ENCODE measurements at regions of chr2 and their contacts with region 1.

Region 1: DNA sequence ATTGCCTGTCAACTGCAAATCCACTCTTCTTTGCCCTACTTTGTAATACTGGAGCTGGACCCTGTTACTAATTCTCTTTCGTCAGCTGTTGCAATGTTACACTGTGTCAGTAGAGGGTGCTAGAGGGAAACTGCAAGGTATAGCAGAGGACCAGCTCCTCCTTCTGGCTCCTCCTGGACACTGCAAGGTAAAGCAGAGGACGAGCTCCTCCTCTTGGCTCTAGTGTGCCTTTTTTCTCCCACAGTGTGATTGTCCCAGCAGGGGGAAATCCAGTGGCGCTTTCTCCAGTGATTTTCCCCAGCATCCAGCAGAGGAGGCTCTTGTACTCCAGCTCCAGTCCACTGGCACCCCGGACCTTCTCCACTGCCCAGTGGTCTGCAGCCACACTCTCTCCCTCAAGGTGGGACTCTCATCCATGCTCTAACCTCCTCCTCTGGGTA is 95.6 kb downstream of the CAPN13 start:
- DNase-seq: peak in 8 of 10 donors; percentile 38 to 93 (median 76)

Region 2: DNA sequence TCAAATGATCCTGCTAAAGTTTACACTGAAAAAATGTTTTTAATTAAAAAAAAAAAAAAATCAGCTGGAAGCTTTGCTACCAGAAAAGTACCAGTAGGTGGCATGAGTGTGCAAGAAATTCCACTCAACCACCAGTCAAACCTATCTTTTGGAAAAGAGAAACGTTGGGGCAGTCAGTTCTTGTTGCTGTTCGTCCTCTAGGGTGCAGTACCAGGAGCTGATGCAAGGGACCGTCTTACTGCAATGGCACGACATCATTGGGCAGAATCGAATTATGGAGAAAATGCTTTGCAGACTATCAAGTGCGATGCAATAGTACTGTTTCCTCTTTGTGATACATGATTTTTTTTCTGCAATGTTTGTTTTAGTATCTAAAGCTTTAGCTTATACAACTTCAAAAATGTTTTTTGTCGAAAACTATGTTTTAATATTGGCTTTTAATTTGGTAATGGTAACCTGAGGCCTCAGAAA is 546.6 kb before region 1 on chr2:
- intact Hi-C with region 1: loop called (anchors 1 kb)
- DNase-seq: peak in 4 of 10 donors; percentile 31 to 43 (median 39)

Region 3: DNA sequence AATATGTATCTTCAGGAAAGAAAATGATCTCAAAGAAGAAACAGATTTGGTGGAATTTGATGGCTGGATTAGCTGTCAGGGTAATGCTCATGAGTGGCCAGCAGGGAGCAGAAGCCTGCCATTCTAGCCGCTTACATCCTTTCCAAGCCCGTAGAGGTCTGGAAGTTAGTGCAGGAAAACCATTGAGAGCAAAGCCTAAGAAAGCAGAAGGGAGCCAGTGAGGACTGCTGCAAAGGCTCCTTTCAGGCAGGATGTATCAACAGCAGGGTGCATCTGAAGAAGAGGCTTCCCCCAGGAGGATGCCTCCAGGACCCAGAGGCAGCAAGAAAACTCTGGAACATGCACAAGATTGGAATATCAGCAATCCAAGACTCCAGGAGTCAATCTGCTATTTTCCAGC is 503.2 kb before region 1 on chr2:
- intact Hi-C with region 1: loop called (anchors 1 kb)
- DNase-seq: peak in 8 of 10 donors; percentile 28 to 95 (median 66)

Region 4: GRCh38 chr2:30862054-30862651 is 150.5 kb after region 1 on chr2:
- intact Hi-C with region 1: loop called (anchors 2 kb)
- DNase-seq: peak in 8 of 10 donors; percentile 26 to 90 (median 64)

Region 5: GRCh38 chr2:30956995-30957394 is 245.3 kb after region 1 on chr2:
- intact Hi-C with region 1: no loop called
- DNase-seq: no peak

Region 6: GRCh38 chr2:31170071-31170698 is 458.5 kb after region 1 on chr2:
- intact Hi-C with region 1: loop called (anchors 1 kb)
- DNase-seq: peak; percentile 40 to 95 (median 70)

Region 7: GRCh38 chr2:31271791-31272277 is 560.2 kb after region 1 on chr2:
- intact Hi-C with region 1: no loop called
- DNase-seq: no peak

Region 8: GRCh38 chr2:31333527-31334183 is 622.0 kb after region 1 on chr2:
- intact Hi-C with region 1: loop called (anchors 2 kb)
- DNase-seq: peak; percentile 71 to 95 (median 89)